H1 (cell line): ENCODE measurements at regions of chr2 and their contacts with region 1.

Region 1: DNA sequence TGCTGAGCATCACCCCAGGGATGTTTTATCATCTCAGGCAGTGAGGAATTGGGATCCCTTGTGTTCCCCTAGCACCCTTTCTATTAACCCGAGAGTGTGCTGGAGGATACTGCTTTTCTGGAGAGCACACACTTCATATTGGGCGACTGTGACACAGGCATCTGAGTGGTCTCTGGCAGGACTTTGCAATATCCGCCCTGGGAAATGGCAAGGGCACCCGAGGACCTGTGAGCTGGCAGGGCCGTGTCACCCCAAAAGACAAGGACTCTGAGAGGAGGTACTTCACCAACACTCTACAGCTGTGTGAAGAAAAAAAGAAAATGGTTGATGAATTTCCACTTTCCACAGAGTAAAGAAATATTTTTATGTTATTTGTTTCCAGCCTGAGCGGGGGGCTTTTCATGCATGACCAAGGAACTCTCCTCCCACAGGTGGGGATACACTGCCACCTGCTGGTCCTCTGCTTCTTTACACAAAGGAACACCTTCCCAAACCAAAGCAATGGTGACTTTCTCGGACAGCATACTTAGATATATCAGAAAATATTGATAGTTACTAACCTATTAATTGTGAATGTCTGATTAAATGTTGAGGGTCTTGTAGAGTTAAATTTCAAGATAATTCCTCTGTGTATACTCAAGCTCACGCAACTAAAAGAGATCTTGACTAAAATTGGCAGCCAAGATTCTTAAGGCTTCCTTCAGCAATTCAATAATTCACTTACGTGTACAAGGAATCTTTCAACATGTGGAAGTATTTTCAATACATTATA is 45.9 kb upstream of the REG3G start:
- DNase-seq: peak; percentile 17 to 88
- H3K4me3 ChIP-seq: no peak overlapping the region
- H3K27ac ChIP-seq: no peak overlapping the region
- H3K4me1 ChIP-seq: peaks cover 0 to 8% (median 4%) of the 10 kb centered on the region in 4 experiments; a peak in 5 of 7 replicates
- H3K27me3 ChIP-seq: no peaks in the 10 kb centered on the region
- CTCF ChIP-seq: peak; percentile 60 to 73 (median 72)
- EP300 ChIP-seq: no peak
- POLR2A ChIP-seq: no peak
- RAD21 ChIP-seq: peak; percentile 96 to 97

Region 2: DNA sequence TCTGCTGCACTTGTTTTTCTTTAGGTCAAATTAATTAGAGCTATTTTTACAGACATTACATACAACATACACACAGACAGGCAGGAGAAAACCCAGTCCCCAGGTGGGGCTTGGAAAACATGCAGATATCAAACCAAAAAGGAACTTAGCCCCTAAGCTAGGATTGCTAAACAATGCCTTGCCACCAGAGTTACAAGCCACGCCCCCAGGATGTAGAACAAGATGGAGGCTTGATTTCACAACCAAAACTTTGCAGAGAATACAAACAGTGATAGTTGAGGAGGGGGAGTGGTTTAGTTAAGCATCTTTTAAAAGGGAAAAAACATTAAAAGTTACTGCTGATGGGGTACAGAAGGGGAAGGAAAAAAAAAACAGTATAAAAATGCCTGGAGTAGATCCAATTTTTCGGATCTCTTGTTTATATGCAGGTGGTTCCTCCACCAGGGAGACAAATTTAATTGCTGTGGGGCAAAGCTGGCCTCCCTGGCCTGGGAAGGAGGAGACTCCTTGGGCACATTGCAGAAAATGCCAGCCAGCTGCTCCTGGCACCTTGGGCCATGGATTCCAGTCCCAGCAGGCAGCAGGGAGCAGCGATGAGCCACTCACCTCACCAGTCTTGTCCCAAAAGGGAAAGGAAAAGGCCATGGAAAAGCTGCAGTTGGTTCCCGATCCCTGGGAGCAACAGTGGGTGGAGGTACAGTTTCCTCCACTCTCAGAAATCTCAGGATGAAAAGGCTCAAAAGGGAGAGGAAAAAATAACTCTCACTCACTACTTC is 302.5 kb before region 1 on chr2:
- CTCF ChIA-PET with region 1: interaction called, 65 read pairs
- POLR2A ChIA-PET with region 1: no interaction called
- DNase-seq: no peak
- H3K4me3 ChIP-seq: no peak overlapping the region
- H3K27ac ChIP-seq: no peak overlapping the region
- H3K4me1 ChIP-seq: no peaks in the 10 kb centered on the region; a peak in 1 of 7 replicates
- H3K27me3 ChIP-seq: no peaks in the 10 kb centered on the region
- CTCF ChIP-seq: peak; percentile 33 to 36 (median 36); a peak in 3 of 4 replicates
- EP300 ChIP-seq: no peak
- POLR2A ChIP-seq: no peak
- RAD21 ChIP-seq: peak; percentile 51 to 60

Region 3: DNA sequence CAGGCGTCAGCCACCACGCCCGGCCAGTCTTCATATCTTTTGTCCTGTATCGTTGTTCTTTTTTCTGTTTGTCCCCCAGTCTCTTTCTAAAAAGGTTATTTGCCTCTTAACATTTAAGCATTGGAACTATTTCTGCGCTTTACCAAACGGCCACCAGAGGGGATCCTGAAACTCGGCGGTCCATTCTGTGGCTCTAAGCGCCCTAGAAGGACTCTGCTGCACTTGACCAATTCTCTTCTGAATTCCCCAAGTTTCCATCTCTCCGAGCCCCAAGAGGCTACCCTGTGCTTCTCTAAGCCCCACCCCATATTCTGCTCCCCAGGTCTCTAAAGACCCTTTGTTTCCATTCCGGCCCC is 12.9 kb after region 1 on chr2:
- CTCF ChIA-PET with region 1: interaction called, 67 read pairs
- POLR2A ChIA-PET with region 1: no interaction called
- DNase-seq: peak; percentile 21 to 66
- H3K4me3 ChIP-seq: peak overlapping the region; percentile 33 to 65 (median 58); a peak in 7 of 8 replicates
- H3K27ac ChIP-seq: no peak overlapping the region
- H3K4me1 ChIP-seq: no peaks in the 10 kb centered on the region
- H3K27me3 ChIP-seq: peaks cover 10 to 29% (median 26%) of the 10 kb centered on the region in 4 experiments
- CTCF ChIP-seq: peak; percentile 51 to 65 (median 57)
- EP300 ChIP-seq: no peak
- POLR2A ChIP-seq: no peak
- RAD21 ChIP-seq: peak; percentile 39 to 42

Region 4: GRCh38 chr2:78999406-78999805 is 19.8 kb after region 1 on chr2:
- CTCF ChIA-PET with region 1: interaction called, 67 read pairs
- POLR2A ChIA-PET with region 1: no interaction called
- DNase-seq: no peak
- H3K4me3 ChIP-seq: no peak overlapping the region
- H3K27ac ChIP-seq: no peak overlapping the region
- H3K4me1 ChIP-seq: no peaks in the 10 kb centered on the region
- H3K27me3 ChIP-seq: peaks cover 4 to 10% (median 7%) of the 10 kb centered on the region in 4 experiments
- CTCF ChIP-seq: peak in 2 of 3 experiments; percentile 14 to 22; a peak in 2 of 4 replicates
- EP300 ChIP-seq: no peak
- POLR2A ChIP-seq: no peak
- RAD21 ChIP-seq: peak; percentile 56 to 60